HepG2 (cell line): ENCODE measurements at regions of chr11 and their contacts with region 1.

Region 1: GRCh38 chr11:3867209-3868091 is 12.0 kb downstream of the STIM1 start:
- DNase-seq: peak; percentile 28
- ATAC-seq: peak; percentile 59
- H3K4me3 ChIP-seq: peak overlapping the region; percentile 15 to 33 (median 19)
- H3K27ac ChIP-seq: peak overlapping the region; percentile 84
- H3K4me1 ChIP-seq: peaks cover 67% of the 10 kb centered on the region
- H3K27me3 ChIP-seq: no peaks in the 10 kb centered on the region; a peak in 1 of 5 replicates
- CTCF ChIP-seq: no peak
- EP300 ChIP-seq: no peak
- POLR2A ChIP-seq: no peak
- RAD21 ChIP-seq: no peak

Region 2: DNA sequence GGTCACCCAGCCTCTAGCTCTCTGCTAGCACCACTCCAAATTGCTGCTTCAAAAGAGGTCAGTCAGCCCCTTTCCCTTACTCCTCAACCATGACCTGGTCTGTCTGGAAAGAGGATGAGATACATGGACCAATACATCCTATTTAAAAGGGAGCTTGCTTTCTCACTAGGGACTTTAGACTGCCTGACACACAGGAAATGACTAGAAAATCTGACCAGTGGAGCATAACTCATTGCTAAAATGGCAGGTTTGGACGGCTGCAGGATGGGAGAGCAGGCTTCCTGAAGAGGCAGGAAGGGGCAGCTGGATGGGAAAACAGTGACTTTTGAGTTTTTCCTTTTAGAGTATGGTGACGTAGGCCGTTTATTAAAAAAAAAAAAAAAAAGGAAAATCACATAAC is 13.3 kb after region 1 on chr11:
- CTCF ChIA-PET with region 1: no interaction called
- POLR2A ChIA-PET with region 1: interaction called, 10 read pairs
- in situ Hi-C with region 1: no loop called
- intact Hi-C with region 1: no loop called
- DNase-seq: peak; percentile 65
- ATAC-seq: peak; percentile 54
- H3K4me3 ChIP-seq: peak overlapping the region; percentile 41 to 49 (median 47); a peak in 5 of 6 replicates
- H3K27ac ChIP-seq: peak overlapping the region; percentile 78
- H3K4me1 ChIP-seq: peaks cover 59% of the 10 kb centered on the region
- H3K27me3 ChIP-seq: no peaks in the 10 kb centered on the region
- CTCF ChIP-seq: no peak
- EP300 ChIP-seq: no peak
- POLR2A ChIP-seq: no peak
- RAD21 ChIP-seq: no peak